Heart left ventricle (tissue), 16 donors: ENCODE measurements at regions of chr5 and their contacts with region 1.

Region 1: DNA sequence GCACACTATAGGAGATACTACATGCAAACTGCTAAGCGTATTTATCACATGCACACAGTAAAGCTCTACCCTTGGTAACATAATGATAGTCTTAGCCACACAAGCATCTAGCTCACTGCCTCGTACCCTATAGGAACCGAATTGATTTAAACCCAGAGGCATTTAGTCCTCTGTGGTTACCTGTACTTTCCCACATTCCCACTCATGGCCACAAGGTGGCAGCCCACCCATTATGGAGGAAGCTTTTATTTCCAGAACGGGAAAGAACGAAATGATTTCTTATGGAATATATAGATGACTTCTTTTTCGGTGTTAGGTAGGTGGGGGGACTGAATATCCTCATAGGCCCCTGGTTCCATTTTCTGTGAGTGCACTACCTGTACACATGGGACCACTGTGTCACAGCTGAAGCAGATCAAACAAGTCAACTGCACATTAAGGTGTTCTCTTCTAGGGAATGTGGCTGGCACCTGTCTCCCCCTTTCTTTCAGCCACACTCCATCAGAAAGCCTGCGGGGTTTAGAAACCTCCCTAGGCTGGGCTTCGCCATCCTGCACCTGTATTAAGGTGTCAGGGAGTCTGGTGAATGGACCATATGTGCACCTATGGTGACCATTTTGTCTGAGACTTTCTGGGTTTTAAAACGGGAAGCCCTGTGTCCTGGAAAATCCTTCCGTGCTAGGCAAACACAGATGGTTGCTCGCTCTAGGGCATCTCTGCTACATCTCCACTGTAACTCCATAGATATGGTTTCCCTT is 313.2 kb downstream of the SLIT3 start:
- DNase-seq: peak; percentile 38 to 70 (median 62)
- ATAC-seq: peak in 3 of 4 donors; percentile 48 to 59 (median 54)
- H3K4me3 ChIP-seq: no peak overlapping the region
- H3K27ac ChIP-seq: no peak overlapping the region
- H3K4me1 ChIP-seq: peaks cover 0 to 13% (median 5%) of the 10 kb centered on the region in 12 donors
- H3K27me3 ChIP-seq: peaks cover 0 to 12% (median 2%) of the 10 kb centered on the region in 9 donors
- CTCF ChIP-seq: peak; percentile 78 to 93 (median 90)
- POLR2A ChIP-seq: no peak

Region 2: GRCh38 chr5:168822745-168823281 is 164.9 kb before region 1 on chr5:
- intact Hi-C with region 1: no loop called
- DNase-seq: peak in 1 of 5 donors; percentile 37
- ATAC-seq: peak in 1 of 4 donors; percentile 8
- H3K4me3 ChIP-seq: no peak overlapping the region
- H3K27ac ChIP-seq: peak overlapping the region in 1 of 12 donors; percentile 5
- H3K4me1 ChIP-seq: peaks cover 0 to 33% (median 5%) of the 10 kb centered on the region in 12 donors
- H3K27me3 ChIP-seq: no peaks in the 10 kb centered on the region
- CTCF ChIP-seq: no peak
- POLR2A ChIP-seq: no peak

Region 3: DNA sequence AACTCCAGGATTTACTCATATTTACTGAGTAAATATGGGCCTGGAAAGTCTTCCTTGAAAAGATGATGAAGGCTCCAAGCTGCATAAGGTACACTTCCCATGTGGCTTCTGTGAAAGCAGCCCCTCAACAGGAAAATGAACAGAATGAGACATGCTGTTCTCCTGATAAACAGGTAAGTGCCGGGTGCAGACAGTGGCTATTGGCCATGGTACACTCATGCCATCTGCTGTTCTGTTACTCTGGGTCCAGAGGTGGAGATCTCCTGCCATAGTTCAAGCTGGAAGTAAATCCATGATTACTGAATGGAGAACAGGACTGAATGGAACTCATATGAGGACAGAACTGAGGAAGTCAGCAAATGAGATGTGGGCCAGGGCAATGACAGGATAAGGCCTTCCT is 209.6 kb after region 1 on chr5:
- intact Hi-C with region 1: loop called (anchors 2 to 5 kb)
- DNase-seq: peak in 3 of 5 donors; percentile 14 to 35 (median 27)
- ATAC-seq: peak; percentile 42 to 77 (median 74)
- H3K4me3 ChIP-seq: no peak overlapping the region
- H3K27ac ChIP-seq: no peak overlapping the region
- H3K4me1 ChIP-seq: no peaks in the 10 kb centered on the region
- H3K27me3 ChIP-seq: no peaks in the 10 kb centered on the region
- CTCF ChIP-seq: peak in 11 of 12 donors; percentile 25 to 55 (median 41)
- POLR2A ChIP-seq: no peak

Region 4: DNA sequence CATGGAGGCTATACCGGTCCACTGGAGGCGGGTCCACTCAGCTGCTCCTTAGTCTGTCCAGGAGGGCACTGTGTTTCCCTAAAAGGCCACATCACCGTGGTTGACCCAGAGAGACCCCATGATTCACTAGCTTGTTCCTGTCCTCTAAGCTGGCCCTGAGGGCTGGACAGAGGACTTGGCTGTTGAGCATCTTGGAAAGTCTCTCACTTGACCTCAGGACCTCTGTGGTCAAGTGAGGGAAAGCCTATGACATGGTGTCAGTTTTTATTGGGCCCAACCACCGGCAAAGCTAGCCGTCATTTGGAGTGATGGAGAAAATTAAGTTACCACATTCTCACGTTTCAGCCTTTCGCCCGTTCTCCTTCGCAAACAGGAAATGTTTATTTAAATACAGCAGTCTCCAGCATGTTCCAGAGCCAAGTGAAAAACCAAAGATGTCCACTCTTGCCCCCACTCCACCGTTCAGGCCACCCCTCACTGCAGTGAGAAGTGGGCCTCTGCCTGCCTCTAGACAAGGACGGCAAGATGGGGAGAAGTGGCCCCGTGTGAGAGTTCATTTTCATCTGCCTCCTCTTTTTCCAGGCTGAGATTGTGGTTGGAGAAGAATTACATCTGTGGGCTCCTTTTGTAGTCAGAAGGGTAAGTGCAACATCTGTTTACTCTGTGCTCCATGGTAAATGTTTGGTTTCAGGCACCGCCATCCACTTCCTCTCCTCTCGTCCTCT is 308.9 kb after region 1 on chr5:
- intact Hi-C with region 1: loop called in 5 of 10 experiments (anchors 1 to 5 kb)
- DNase-seq: no peak
- ATAC-seq: peak in 2 of 4 donors; percentile 18 to 37
- H3K4me3 ChIP-seq: no peak overlapping the region
- H3K27ac ChIP-seq: peak overlapping the region in 3 of 12 donors; percentile 22 to 63 (median 61)
- H3K4me1 ChIP-seq: peaks cover 0 to 25% (median 3%) of the 10 kb centered on the region in 12 donors
- H3K27me3 ChIP-seq: peaks cover 0 to 16% (median 6%) of the 10 kb centered on the region in 9 donors
- CTCF ChIP-seq: no peak
- POLR2A ChIP-seq: no peak

Region 5: DNA sequence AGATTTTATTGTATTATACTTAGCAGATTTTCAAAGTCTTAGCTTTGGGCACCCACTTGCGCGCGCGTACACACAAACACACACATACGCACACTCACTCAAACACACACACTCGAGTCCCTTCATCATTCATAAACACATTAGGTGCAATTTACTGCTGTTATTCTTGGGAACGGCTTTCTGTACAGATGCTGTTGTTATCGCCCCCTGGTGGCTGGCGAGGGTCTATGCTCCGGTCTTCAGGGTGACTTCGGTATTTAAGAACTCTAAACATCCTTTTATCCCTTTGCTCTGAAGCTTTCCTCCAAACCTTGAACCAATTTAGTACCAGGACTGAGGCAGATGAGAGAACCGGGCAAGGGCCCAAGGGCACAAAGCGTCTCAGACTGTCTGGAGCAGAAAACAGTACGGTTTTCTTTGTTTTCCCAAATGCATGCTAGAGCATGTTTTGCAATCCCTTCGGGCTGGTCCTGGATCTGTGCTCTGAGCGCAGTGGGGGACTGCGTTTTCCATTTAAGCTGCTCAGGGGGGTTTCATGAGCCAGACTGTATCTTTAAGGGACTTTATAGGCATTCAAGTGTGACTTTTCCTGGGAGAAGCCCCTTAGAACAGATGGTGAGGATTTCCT is 314.9 kb after region 1 on chr5:
- intact Hi-C with region 1: loop called (anchors 1 to 5 kb)
- DNase-seq: peak; percentile 58 to 76 (median 65)
- ATAC-seq: peak in 3 of 4 donors; percentile 30 to 62 (median 53)
- H3K4me3 ChIP-seq: no peak overlapping the region
- H3K27ac ChIP-seq: no peak overlapping the region
- H3K4me1 ChIP-seq: peaks cover 0 to 34% (median 7%) of the 10 kb centered on the region in 12 donors
- H3K27me3 ChIP-seq: peaks cover 0 to 48% (median 24%) of the 10 kb centered on the region in 9 donors
- CTCF ChIP-seq: peak; percentile 77 to 92 (median 88)
- POLR2A ChIP-seq: no peak

Region 6: GRCh38 chr5:169548315-169548714 is 560.6 kb after region 1 on chr5:
- intact Hi-C with region 1: loop called (anchors 2 to 10 kb)
- DNase-seq: no peak
- ATAC-seq: peak in 3 of 4 donors; percentile 74 to 87 (median 79)
- H3K4me3 ChIP-seq: no peak overlapping the region
- H3K27ac ChIP-seq: no peak overlapping the region
- H3K4me1 ChIP-seq: no peaks in the 10 kb centered on the region
- H3K27me3 ChIP-seq: peaks cover 0 to 29% (median 6%) of the 10 kb centered on the region in 9 donors
- CTCF ChIP-seq: peak in 11 of 12 donors; percentile 18 to 61 (median 50)
- POLR2A ChIP-seq: no peak

Region 7: DNA sequence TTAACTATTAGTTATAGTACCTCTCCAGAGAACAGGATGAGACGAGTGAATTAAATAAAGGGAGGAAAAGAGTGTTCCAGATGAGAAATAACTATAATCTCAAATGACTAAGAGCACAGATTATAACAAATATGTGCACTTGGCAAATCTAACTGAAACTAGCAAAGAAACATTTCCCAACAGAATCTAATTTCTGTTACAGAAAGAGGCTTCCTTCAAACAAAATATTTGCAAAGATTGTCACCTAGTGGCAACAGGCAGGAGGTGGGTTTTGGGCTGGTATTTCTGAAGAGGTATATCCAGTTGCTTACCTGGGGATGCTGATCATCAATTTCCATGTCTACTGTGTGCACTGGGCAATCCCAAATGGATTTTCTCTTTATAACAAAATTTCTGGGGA is 590.2 kb after region 1 on chr5:
- intact Hi-C with region 1: loop called in 6 of 10 experiments (anchors 2 to 10 kb)
- DNase-seq: no peak
- ATAC-seq: peak in 1 of 4 donors; percentile 15
- H3K4me3 ChIP-seq: no peak overlapping the region
- H3K27ac ChIP-seq: no peak overlapping the region
- H3K4me1 ChIP-seq: peaks cover 0 to 8% (median 0%) of the 10 kb centered on the region in 12 donors
- H3K27me3 ChIP-seq: peaks cover 0 to 41% (median 0%) of the 10 kb centered on the region in 9 donors
- CTCF ChIP-seq: peak in 5 of 12 donors; percentile 7 to 21 (median 14)
- POLR2A ChIP-seq: no peak

Region 8: GRCh38 chr5:169583424-169584204 is 595.9 kb after region 1 on chr5 and contains the start of gene SPDL1:
- intact Hi-C with region 1: loop called in 6 of 10 experiments (anchors 2 to 10 kb)
- DNase-seq: peak; percentile 94 to 97 (median 95)
- ATAC-seq: peak; percentile 94 to 98 (median 97)
- H3K4me3 ChIP-seq: peak within 1 kb of the TSS; percentile 47 to 95 (median 73)
- H3K27ac ChIP-seq: peak within 1 kb of the TSS in 11 of 12 donors; percentile 41 to 82 (median 75)
- H3K4me1 ChIP-seq: peaks cover 0 to 21% (median 6%) of the 10 kb centered on the region in 12 donors
- H3K27me3 ChIP-seq: peaks cover 0 to 3% (median 0%) of the 10 kb centered on the region in 9 donors
- CTCF ChIP-seq: no peak
- POLR2A ChIP-seq: peak in 1 of 2 donors; percentile 88
- total RNA-seq, gene SPDL1: 3.3 to 7.0 (median 5.0) TPM